MCF 10A (cell line): ENCODE measurements at regions of chr1 and their contacts with region 1.

Region 1: GRCh38 chr1:118151312-118151937 is 33.6 kb downstream of the SPAG17 start:
- DNase-seq: peak; percentile 61
- H3K4me3 Mint-ChIP-seq: no peak overlapping the region
- H3K27ac Mint-ChIP-seq: no peak overlapping the region
- H3K4me1 Mint-ChIP-seq: peaks cover 7% of the 10 kb centered on the region
- H3K27me3 Mint-ChIP-seq: no peaks in the 10 kb centered on the region
- CTCF ChIP-seq: peak; percentile 69

Region 2: DNA sequence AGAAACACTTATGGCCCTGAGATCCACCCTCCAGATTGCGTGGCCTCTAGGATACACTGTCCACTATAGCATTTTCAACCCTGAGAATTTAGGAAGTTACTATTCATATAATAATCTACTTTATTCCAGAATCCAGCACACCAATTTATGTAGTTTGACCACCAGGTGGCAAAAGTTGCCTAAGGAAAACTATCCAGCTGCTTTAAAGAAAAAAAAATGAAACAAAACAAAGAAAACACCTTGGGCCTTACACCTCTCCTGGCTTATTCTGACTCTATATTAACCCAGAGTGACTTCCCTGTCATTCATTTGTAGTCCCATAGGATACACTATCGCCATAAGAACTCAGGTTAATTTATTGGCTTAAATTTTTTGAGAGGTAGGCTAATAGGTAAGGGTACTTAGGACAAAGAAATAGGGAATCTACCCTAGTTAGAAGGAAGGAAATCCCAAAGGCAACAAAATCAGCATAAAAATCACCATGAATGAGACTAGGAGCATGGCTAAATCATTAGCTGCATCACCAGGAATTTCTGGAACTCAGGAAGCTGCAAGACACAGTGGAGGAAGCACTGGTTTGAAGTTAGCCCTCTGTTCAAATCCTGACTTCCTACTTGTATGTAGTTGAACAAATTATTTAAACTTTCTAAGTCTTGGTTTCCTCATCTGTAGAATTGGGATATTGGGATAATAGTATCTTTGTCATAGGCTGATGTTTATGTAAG is 73.9 kb before region 1 on chr1:
- CTCF ChIA-PET with region 1: interaction called, 8 read pairs
- POLR2A ChIA-PET with region 1: interaction called, 3 read pairs
- intact Hi-C with region 1: loop called (anchors 1 kb)
- DNase-seq: peak; percentile 63
- H3K4me3 Mint-ChIP-seq: no peak overlapping the region
- H3K27ac Mint-ChIP-seq: no peak overlapping the region
- H3K4me1 Mint-ChIP-seq: no peaks in the 10 kb centered on the region
- H3K27me3 Mint-ChIP-seq: no peaks in the 10 kb centered on the region
- CTCF ChIP-seq: peak; percentile 65

Region 3: DNA sequence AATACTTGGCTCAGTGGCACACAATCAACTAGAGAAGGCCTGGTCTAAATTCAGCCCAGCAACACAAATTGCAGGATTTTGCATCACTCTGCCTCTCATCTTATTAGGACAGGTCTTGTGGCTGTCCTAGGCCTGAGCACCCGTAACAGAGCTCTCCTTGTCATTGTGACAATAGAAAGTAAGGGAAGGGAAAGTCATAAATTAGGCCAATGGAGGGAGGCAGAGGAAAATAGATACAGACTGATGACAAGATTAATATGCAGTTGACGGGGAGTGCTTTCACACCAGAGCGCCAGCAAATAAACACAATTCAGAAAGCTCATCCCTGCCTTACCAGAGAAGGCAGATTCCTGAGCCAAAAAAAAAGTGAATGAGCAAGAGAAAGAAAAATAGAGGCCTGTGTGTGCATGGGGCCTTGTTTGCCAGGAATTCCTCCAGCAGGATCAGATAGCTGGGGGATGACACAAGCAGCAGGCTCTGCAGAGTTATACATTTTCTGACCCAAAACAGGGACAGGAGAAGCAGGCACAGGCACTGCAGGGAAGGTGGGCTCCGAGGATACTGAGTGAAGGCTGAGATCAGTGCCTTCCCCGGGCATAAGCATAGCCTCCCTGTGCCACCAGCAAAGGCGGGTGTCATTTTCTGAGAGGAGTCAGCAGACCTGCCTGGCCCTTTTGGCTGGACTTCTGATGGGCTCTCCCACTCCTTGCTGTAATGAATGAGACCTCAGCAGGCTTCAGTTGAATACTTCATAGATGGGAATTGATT is 143.6 kb after region 1 on chr1:
- CTCF ChIA-PET with region 1: no interaction called
- POLR2A ChIA-PET with region 1: no interaction called
- intact Hi-C with region 1: no loop called
- DNase-seq: no peak
- H3K4me3 Mint-ChIP-seq: no peak overlapping the region
- H3K27ac Mint-ChIP-seq: no peak overlapping the region
- H3K4me1 Mint-ChIP-seq: no peaks in the 10 kb centered on the region
- H3K27me3 Mint-ChIP-seq: no peaks in the 10 kb centered on the region
- CTCF ChIP-seq: no peak

Region 4: DNA sequence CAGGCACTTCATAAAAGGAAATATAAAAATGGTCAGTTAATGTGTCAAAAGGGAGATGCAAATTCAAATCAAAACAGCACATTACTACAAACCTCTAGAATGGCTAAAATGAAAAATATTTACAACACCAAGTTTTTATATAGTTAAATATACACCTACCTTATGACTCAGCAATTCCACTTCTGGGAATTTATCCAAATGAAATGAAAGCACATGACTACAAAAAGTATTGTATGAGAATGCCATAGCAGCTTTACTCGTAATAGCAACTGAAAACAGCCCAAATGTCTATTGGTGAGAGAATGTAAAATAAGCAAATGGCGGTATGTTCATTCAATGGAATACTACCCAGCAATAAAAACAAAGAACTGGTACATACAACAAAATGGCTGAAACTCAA is 209.4 kb after region 1 on chr1:
- CTCF ChIA-PET with region 1: no interaction called
- POLR2A ChIA-PET with region 1: no interaction called
- intact Hi-C with region 1: loop called (anchors 10 kb)
- DNase-seq: peak; percentile 81
- H3K4me3 Mint-ChIP-seq: no peak overlapping the region
- H3K27ac Mint-ChIP-seq: peak overlapping the region; percentile 85
- H3K4me1 Mint-ChIP-seq: peaks cover 6% of the 10 kb centered on the region
- H3K27me3 Mint-ChIP-seq: no peaks in the 10 kb centered on the region
- CTCF ChIP-seq: no peak

Region 5: GRCh38 chr1:118809586-118809985 is 658.2 kb after region 1 on chr1:
- CTCF ChIA-PET with region 1: no interaction called
- POLR2A ChIA-PET with region 1: no interaction called
- intact Hi-C with region 1: loop called (anchors 10 kb)
- DNase-seq: no peak
- H3K4me3 Mint-ChIP-seq: no peak overlapping the region
- H3K27ac Mint-ChIP-seq: no peak overlapping the region
- H3K4me1 Mint-ChIP-seq: no peaks in the 10 kb centered on the region
- H3K27me3 Mint-ChIP-seq: no peaks in the 10 kb centered on the region
- CTCF ChIP-seq: no peak

Region 6: DNA sequence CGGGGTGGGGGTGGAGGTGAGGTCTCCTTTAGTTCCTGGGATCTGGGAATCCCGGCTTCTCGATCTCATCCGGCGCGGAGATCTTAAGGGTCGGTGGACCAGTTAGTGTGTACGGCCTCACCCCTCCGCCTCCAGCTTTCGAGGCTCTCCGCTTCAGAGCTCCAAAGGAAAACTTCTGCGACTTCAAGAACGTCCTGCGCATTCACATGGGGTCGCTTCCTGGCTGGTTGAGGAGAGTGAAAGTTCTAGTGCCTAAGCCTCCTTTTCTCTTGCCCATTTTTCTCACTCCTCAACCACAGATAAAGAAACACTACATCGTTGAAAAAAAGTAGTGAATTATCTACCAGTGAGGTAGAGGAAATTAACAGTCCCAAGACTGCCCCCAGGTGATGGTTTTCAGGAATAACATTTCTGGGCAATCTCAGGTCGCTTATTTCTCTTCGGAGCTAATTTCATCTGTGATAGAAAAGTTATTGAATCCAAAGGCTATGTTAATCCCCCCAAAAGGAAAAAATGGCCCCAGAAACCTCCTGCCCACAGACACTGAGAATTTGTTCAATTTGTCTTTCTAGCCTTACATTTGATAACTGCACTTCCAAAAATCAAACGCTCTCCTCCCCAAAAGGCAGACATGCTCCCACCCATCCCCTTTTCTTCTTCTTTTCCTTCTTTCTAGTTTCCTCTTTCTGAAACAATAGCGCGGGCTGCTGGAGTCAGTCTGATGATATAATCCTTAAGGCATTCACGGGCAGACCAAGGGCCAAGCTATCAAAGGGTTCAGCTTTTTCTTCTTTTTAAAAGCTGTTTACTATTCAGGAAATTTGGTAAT is 857.3 kb after region 1 on chr1:
- CTCF ChIA-PET with region 1: interaction called, 31 read pairs
- POLR2A ChIA-PET with region 1: interaction called, 5 read pairs
- intact Hi-C with region 1: loop called (anchors 1 kb)
- DNase-seq: peak; percentile 52
- H3K4me3 Mint-ChIP-seq: no peak overlapping the region
- H3K27ac Mint-ChIP-seq: peak overlapping the region; percentile 24
- H3K4me1 Mint-ChIP-seq: peaks cover 20% of the 10 kb centered on the region
- H3K27me3 Mint-ChIP-seq: no peaks in the 10 kb centered on the region
- CTCF ChIP-seq: peak; percentile 59

Region 7: GRCh38 chr1:119275145-119276134 is 1124.0 kb after region 1 on chr1:
- CTCF ChIA-PET with region 1: interaction called, 6 read pairs
- POLR2A ChIA-PET with region 1: interaction called, 3 read pairs
- intact Hi-C with region 1: loop called (anchors 5 kb)
- DNase-seq: peak; percentile 72
- H3K4me3 Mint-ChIP-seq: no peak overlapping the region
- H3K27ac Mint-ChIP-seq: no peak overlapping the region
- H3K4me1 Mint-ChIP-seq: peaks cover 18% of the 10 kb centered on the region
- H3K27me3 Mint-ChIP-seq: no peaks in the 10 kb centered on the region
- CTCF ChIP-seq: peak; percentile 85